ENCODE measurements at regions of chr20 and their contacts with region 1.

Region 1: GRCh38 chr20:49245921-49246740 is 26.9 kb downstream of the DDX27 start:
- DNase-seq: peak; percentile 39 to 52
- H3K4me3 ChIP-seq: no peak overlapping the region
- H3K27ac ChIP-seq: no peak overlapping the region
- H3K4me1 ChIP-seq: no peaks in the 10 kb centered on the region
- H3K27me3 ChIP-seq: no peaks in the 10 kb centered on the region
- CTCF ChIP-seq: peak; percentile 82

Region 2: GRCh38 chr20:49268600-49269365 is 22.7 kb after region 1 on chr20:
- CTCF ChIA-PET with region 1: no interaction called
- POLR2A ChIA-PET with region 1: interaction called, 13 read pairs
- intact Hi-C with region 1: no loop called
- DNase-seq: no peak
- H3K4me3 ChIP-seq: peak overlapping the region; percentile 1; the same call in 1 of the 2 replicates
- H3K27ac ChIP-seq: no peak overlapping the region
- H3K4me1 ChIP-seq: peaks cover 25% of the 10 kb centered on the region
- H3K27me3 ChIP-seq: no peaks in the 10 kb centered on the region
- CTCF ChIP-seq: no peak

Region 3: GRCh38 chr20:49323622-49324238 is 77.6 kb after region 1 on chr20:
- CTCF ChIA-PET with region 1: interaction called, 12 read pairs
- POLR2A ChIA-PET with region 1: interaction called, 9 read pairs
- intact Hi-C with region 1: loop called (anchors 1 kb)
- DNase-seq: peak; percentile 58 to 66
- H3K4me3 ChIP-seq: no peak overlapping the region
- H3K27ac ChIP-seq: no peak overlapping the region
- H3K4me1 ChIP-seq: no peaks in the 10 kb centered on the region
- H3K27me3 ChIP-seq: peaks cover 27% of the 10 kb centered on the region
- CTCF ChIP-seq: peak; percentile 48; the same call in 1 of the 2 replicates

Region 4: DNA sequence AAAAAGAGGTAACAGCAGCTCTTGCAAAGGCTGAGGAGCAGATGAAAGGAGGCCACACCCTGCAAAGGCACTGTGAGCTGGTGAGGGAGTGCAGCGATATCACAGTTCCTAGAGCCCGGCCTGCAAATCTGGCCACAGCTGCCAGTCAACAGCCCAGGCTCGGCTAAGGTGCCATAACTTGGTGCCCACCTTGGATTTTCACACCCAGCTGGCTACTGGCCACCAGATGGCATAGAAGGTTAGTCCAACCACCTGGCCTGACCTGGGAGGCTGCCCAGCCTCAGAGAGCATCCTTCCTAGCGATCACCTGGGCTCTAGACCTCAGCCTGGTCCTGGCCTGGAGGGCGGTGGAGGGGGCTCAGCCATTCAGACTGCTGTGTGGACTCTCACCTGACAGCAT is 189.5 kb after region 1 on chr20:
- CTCF ChIA-PET with region 1: no interaction called
- POLR2A ChIA-PET with region 1: no interaction called
- intact Hi-C with region 1: no loop called
- DNase-seq: peak in 1 of 2 experiments; percentile 14
- H3K4me3 ChIP-seq: no peak overlapping the region
- H3K27ac ChIP-seq: no peak overlapping the region
- H3K4me1 ChIP-seq: no peaks in the 10 kb centered on the region
- H3K27me3 ChIP-seq: peaks cover 50% of the 10 kb centered on the region
- CTCF ChIP-seq: peak; percentile 52

Region 5: GRCh38 chr20:49534255-49534712 is 288.2 kb after region 1 on chr20:
- CTCF ChIA-PET with region 1: no interaction called
- POLR2A ChIA-PET with region 1: no interaction called
- intact Hi-C with region 1: loop called (anchors 5 kb)
- DNase-seq: peak; percentile 59 to 63
- H3K4me3 ChIP-seq: no peak overlapping the region
- H3K27ac ChIP-seq: no peak overlapping the region
- H3K4me1 ChIP-seq: peaks cover 17% of the 10 kb centered on the region
- H3K27me3 ChIP-seq: no peaks in the 10 kb centered on the region
- CTCF ChIP-seq: peak; percentile 97